ENCODE measurements at regions of chr9 and their contacts with region 1.

Region 1: GRCh38 chr9:107299437-107299836 is 16.4 kb downstream of the RAD23B start:
- DNase-seq: no peak
- H3K4me3 Mint-ChIP-seq: no peak overlapping the region
- H3K27ac Mint-ChIP-seq: no peak overlapping the region
- H3K4me1 Mint-ChIP-seq: peaks cover 39% of the 10 kb centered on the region
- H3K27me3 Mint-ChIP-seq: no peaks in the 10 kb centered on the region

Region 2: GRCh38 chr9:106897236-106897635 is 402.2 kb before region 1 on chr9:
- CTCF ChIA-PET with region 1: no interaction called
- intact Hi-C with region 1: no loop called
- DNase-seq: no peak
- H3K4me3 Mint-ChIP-seq: no peak overlapping the region
- H3K27ac Mint-ChIP-seq: no peak overlapping the region
- H3K4me1 Mint-ChIP-seq: no peaks in the 10 kb centered on the region
- H3K27me3 Mint-ChIP-seq: no peaks in the 10 kb centered on the region

Region 3: GRCh38 chr9:107288696-107289095 is 10.7 kb before region 1 on chr9:
- CTCF ChIA-PET with region 1: interaction called, 8 read pairs
- intact Hi-C with region 1: loop called (anchors 1 kb)
- DNase-seq: no peak
- H3K4me3 Mint-ChIP-seq: no peak overlapping the region
- H3K27ac Mint-ChIP-seq: no peak overlapping the region
- H3K4me1 Mint-ChIP-seq: peaks cover 67% of the 10 kb centered on the region
- H3K27me3 Mint-ChIP-seq: no peaks in the 10 kb centered on the region

Measured in activated naive CD4-positive, alpha-beta T cell treated with anti-CD3 and anti-CD28 coated beads for 36 hours (primary cell).